ENCODE measurements at regions of chr3 and their contacts with region 1.

Region 1: DNA sequence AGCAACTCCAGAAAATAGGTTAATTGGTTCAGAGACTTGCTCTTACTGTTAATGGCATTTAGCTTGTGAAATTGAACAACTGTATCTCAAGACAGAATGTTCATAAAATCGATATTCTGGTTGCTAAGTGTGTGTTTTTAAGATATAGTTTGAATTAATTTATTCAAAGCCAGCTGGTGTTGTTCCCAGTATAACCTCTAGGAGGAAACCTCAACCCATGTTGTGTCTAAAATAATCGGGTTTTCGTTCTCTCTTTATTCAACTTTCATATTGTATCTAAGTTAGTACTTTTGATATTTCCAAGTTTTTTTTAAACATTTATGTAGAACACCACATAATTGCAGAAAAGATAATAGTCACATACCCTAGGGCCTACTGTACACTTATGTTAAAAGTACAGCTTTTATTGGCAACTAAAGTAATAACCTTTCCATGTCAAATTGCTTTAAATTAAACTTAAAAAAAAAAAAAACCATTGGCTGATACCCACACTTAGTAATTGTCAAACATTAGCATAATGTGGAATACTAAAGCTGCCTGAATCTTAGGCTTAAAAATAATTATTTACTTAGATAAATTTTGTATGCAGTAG is 90.9 kb downstream of the SAMMSON start:
- DNase-seq: no peak
- H3K4me3 ChIP-seq: no peak overlapping the region
- CTCF ChIP-seq: peak; percentile 26

Region 2: DNA sequence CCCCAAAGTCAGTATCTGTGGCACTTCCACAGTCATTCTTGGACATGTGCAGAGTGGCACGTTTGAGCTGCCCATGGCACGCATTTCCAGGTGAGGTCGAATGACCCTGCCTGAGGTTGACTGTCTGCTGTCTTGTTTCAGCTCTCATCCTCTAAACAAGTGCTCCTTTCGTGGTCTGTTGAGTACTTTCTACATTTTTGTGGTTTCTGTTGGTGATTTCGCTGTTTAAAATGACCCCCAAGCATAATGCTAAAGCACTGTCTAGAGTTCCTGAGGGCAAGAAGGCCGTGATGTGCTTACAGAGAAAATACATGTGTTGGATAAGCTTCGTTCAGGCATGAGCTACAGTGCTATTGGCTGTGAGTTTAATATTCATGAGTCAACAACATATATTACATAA is 130.8 kb before region 1 on chr3:
- CTCF ChIA-PET with region 1: no interaction called
- POLR2A ChIA-PET with region 1: no interaction called
- DNase-seq: no peak
- H3K4me3 ChIP-seq: no peak overlapping the region
- CTCF ChIP-seq: no peak

Region 3: GRCh38 chr3:70108072-70108471 is 17.7 kb after region 1 on chr3:
- CTCF ChIA-PET with region 1: interaction called, 12 read pairs
- POLR2A ChIA-PET with region 1: no interaction called
- DNase-seq: no peak
- H3K4me3 ChIP-seq: no peak overlapping the region
- CTCF ChIP-seq: peak; percentile 32